ENCODE measurements at regions of chr11 and their contacts with region 1.

Region 1: DNA sequence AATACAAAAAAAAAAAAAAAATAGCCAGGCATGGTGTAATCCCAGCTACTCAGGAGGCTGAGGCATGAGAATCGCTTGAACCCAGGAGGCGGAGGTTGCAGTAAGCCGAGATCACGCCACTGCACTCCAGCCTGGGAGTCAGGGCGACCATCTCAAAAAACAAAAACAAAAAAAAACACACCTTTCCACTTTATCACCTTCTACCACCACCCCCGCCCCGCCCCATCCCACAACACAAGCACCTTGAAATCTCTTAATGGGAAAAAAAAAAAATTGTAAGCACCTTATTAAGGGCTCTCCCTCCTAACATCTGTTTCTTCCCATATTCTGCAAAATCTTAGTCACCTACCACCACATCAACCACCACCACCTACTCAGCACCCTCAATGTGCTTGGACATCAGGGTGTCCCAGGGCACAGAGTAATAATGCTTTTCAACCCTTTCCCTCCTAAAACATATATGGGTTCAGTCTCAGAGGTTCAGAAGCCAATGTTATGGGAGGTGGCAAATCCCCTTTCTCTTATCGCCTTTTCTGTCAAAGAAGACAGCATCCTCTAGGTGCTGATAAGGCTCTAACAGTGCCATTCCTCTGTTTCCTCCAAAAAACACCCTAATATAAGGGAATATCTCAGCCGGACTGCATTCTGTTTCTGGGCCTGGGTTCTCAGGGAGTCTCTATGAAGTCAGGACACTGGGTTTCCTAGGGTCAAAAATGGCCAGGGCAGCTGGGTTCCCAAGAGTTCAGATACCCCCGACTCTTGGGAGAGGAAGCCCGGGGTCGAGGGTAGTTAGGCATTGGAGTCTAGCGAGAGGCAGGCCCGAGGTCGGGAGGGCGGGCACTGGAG is 718 bp downstream of the INTS5 start:
- DNase-seq: no peak
- ATAC-seq: no peak
- H3K4me3 ChIP-seq: peak overlapping the region; percentile 74 to 90 (median 83)
- H3K4me3 Mint-ChIP-seq: peak overlapping the region; percentile 94
- H3K27ac ChIP-seq: peak overlapping the region; percentile 68 to 89
- H3K27ac Mint-ChIP-seq: peak overlapping the region; percentile 97
- H3K4me1 ChIP-seq: peaks cover 14 to 18% of the 10 kb centered on the region in 2 donors
- H3K4me1 Mint-ChIP-seq: peaks cover 22% of the 10 kb centered on the region
- H3K27me3 ChIP-seq: no peaks in the 10 kb centered on the region
- H3K27me3 Mint-ChIP-seq: no peaks in the 10 kb centered on the region
- CTCF ChIP-seq: no peak

Region 2: DNA sequence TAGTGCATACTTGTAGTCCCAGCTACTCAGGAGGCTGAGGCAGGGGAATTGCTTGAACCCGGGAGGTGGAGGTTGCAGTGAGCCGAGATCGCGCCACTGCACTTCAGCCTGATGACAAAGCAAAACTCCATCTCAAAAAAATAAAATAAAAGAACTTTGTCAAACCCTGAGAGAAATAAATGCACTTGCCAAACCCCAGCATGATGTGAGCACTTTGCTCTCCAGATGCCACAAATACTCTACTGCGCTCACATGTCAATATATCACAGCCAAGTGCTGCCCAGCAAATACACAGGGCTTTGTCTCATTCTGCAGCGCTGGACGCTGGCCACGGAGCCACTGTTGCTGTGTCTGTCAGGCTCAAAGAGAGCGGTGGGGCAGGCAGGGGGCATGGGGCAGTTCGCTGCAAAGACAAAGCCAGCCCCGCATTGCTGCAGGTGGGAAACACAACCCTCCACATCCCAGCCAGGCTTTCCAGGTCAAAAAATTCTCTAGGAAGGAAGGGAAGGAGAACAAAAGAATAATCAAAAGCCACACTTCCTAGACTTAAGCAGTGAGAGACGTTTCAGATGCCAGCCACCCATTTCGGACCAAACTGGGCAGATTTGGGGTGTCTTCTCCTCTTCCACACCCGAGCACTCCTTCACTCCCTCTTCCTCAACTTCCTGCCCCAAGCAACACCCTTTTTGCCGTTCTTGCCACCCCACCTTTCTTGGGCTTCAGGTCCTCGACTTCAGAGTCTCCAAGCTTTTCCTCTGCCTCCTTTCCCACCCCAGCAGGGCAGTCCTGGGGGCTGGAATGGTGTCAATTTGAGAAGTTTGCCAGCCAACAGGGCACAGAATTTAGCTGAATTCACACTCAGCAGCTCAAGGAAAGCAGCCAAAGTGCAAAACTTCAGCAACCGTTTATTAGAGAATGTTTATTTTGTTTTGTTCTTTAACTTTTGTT is 150.7 kb before region 1 on chr11:
- CTCF ChIA-PET with region 1: no interaction called
- POLR2A ChIA-PET with region 1: no interaction called
- intact Hi-C with region 1: no loop called
- DNase-seq: no peak
- ATAC-seq: no peak
- H3K4me3 ChIP-seq: no peak overlapping the region
- H3K4me3 Mint-ChIP-seq: no peak overlapping the region
- H3K27ac ChIP-seq: no peak overlapping the region
- H3K27ac Mint-ChIP-seq: no peak overlapping the region
- H3K4me1 ChIP-seq: no peaks in the 10 kb centered on the region
- H3K4me1 Mint-ChIP-seq: no peaks in the 10 kb centered on the region
- H3K27me3 ChIP-seq: peaks cover 0 to 13% (median 2%) of the 10 kb centered on the region in 4 experiments
- H3K27me3 Mint-ChIP-seq: peaks cover 20% of the 10 kb centered on the region
- CTCF ChIP-seq: no peak

Region 3: DNA sequence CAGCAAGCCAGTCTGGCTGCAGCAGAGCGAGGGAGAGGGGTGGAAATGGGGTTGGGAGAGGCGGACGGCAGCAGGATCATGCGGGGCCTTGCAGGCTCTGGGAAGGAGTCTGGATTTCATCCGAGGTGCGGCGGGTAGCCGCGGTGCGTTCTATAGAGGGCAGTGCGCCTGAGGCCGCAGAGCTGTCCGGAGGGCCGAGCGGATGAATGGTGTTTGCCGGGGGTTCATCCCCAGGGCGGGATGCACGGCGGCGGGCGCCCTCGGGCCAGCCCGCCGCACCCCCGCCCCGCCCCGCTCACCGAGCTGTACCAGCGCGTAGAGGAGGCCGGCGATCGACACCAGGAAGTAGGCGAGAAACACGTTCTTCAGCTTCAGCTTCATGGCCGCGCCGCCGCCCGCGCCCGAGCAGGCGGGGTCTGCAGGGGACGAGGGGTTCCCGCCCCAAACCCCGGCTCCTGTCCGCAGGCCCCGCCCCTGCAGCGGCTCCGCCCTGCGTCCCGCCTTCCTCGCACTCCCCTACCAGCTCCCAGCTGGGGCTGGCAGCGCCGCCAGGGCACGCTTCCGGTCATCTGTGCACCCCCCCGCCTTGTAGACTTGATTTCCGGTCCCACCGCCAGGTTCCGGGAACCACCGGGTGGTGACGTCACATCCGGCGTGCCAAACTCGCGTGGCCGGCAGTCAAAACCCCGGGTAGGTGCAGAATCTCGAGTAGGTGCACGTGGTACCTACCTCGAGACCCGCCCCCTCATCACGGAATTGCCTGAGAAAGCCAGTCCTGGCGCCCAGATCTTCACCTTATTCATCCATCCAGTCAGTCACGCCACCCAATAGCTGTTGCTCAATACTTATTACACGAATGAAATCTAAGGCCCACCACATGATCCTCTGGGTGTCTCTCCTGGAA is 30.6 kb before region 1 on chr11 and contains the start of gene B3GAT3:
- CTCF ChIA-PET with region 1: interaction called, 3 read pairs
- POLR2A ChIA-PET with region 1: interaction called, 8 read pairs
- intact Hi-C with region 1: loop called (anchors 1 kb)
- DNase-seq: peak; percentile 99
- ATAC-seq: peak; percentile 92
- H3K4me3 ChIP-seq: peak within 1 kb of the TSS; percentile 80 to 93 (median 88)
- H3K4me3 Mint-ChIP-seq: peak within 1 kb of the TSS; percentile 98
- H3K27ac ChIP-seq: peak within 1 kb of the TSS; percentile 88 to 98
- H3K27ac Mint-ChIP-seq: peak within 1 kb of the TSS; percentile 95
- H3K4me1 ChIP-seq: peaks cover 11 to 19% of the 10 kb centered on the region in 2 donors
- H3K4me1 Mint-ChIP-seq: peaks cover 23% of the 10 kb centered on the region
- H3K27me3 ChIP-seq: no peaks in the 10 kb centered on the region
- H3K27me3 Mint-ChIP-seq: no peaks in the 10 kb centered on the region
- CTCF ChIP-seq: no peak
- total RNA-seq, gene B3GAT3: 63.1 and 66.6 TPM in 2 replicates

Region 4: GRCh38 chr11:62671575-62672389 is 19.4 kb after region 1 on chr11 and contains the starts of genes LBHD1 and UQCC3:
- CTCF ChIA-PET with region 1: interaction called, 5 read pairs
- POLR2A ChIA-PET with region 1: interaction called, 13 read pairs
- intact Hi-C with region 1: loop called (anchors 2 kb)
- DNase-seq: peak; percentile 86
- ATAC-seq: peak; percentile 77
- H3K4me3 ChIP-seq: peak within 1 kb of the TSS; percentile 85 to 97 (median 87)
- H3K4me3 Mint-ChIP-seq: peak within 1 kb of the TSS; percentile 100
- H3K27ac ChIP-seq: peak within 1 kb of the TSS; percentile 56 to 71
- H3K27ac Mint-ChIP-seq: peak within 1 kb of the TSS; percentile 97
- H3K4me1 ChIP-seq: peaks cover 21 to 36% of the 10 kb centered on the region in 2 donors
- H3K4me1 Mint-ChIP-seq: peaks cover 48% of the 10 kb centered on the region
- H3K27me3 ChIP-seq: no peaks in the 10 kb centered on the region
- H3K27me3 Mint-ChIP-seq: no peaks in the 10 kb centered on the region
- CTCF ChIP-seq: no peak
- total RNA-seq, gene LBHD1: 32.5 and 33.3 TPM in 2 replicates
- total RNA-seq, gene UQCC3: 6.5 and 8.9 TPM in 2 replicates

Region 5: GRCh38 chr11:62678770-62679696 is 26.6 kb after region 1 on chr11 and contains the start of gene UBXN1:
- CTCF ChIA-PET with region 1: interaction called, 6 read pairs
- POLR2A ChIA-PET with region 1: interaction called, 13 read pairs
- intact Hi-C with region 1: loop called (anchors 1 kb)
- DNase-seq: peak; percentile 92
- ATAC-seq: peak; percentile 77
- H3K4me3 ChIP-seq: peak within 1 kb of the TSS; percentile 71 to 99 (median 98)
- H3K4me3 Mint-ChIP-seq: peak within 1 kb of the TSS; percentile 88
- H3K27ac ChIP-seq: peak within 1 kb of the TSS; percentile 83 to 99
- H3K27ac Mint-ChIP-seq: peak within 1 kb of the TSS; percentile 93
- H3K4me1 ChIP-seq: peaks cover 9 to 20% of the 10 kb centered on the region in 2 donors
- H3K4me1 Mint-ChIP-seq: peaks cover 34% of the 10 kb centered on the region
- H3K27me3 ChIP-seq: no peaks in the 10 kb centered on the region
- H3K27me3 Mint-ChIP-seq: no peaks in the 10 kb centered on the region
- CTCF ChIP-seq: no peak
- total RNA-seq, gene UBXN1: 186 and 193 TPM in 2 replicates

Region 6: DNA sequence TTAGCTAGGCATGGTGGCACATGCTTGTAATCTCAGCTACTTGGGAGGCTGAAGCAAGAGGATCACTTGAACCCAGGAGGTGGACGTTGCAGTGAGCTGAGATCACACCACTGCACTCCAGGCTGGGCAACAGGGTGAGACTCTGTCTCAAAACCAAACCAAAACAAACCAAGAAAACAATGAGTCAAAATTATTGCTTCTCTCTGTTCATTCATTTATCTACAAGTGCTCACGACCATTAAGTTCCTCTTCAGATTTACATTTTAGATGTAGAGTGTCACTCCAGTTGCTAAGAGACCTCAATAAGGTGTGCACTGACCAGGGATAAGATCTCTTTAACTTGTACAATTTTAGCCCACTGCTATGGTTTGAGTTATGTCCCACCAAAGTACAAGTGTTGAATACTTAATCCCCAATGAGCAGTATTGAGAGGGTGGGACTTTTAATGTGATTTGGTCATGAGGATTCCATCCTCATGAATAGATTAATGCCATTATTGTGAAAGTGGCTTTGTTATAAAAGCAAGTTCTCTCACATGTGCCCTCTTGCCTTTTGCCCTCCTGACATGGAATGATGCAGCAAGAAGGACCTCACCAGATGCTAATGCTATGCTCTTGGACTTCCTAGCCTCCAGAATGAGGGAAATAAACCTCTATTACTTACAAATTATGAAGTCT is 67.1 kb after region 1 on chr11:
- CTCF ChIA-PET with region 1: no interaction called
- POLR2A ChIA-PET with region 1: no interaction called
- intact Hi-C with region 1: no loop called
- DNase-seq: no peak
- ATAC-seq: no peak
- H3K4me3 ChIP-seq: no peak overlapping the region
- H3K4me3 Mint-ChIP-seq: no peak overlapping the region
- H3K27ac ChIP-seq: no peak overlapping the region
- H3K27ac Mint-ChIP-seq: no peak overlapping the region
- H3K4me1 ChIP-seq: peaks cover 8 to 11% of the 10 kb centered on the region in 2 donors
- H3K4me1 Mint-ChIP-seq: peaks cover 27% of the 10 kb centered on the region
- H3K27me3 ChIP-seq: no peaks in the 10 kb centered on the region
- H3K27me3 Mint-ChIP-seq: no peaks in the 10 kb centered on the region
- CTCF ChIP-seq: no peak

Region 7: DNA sequence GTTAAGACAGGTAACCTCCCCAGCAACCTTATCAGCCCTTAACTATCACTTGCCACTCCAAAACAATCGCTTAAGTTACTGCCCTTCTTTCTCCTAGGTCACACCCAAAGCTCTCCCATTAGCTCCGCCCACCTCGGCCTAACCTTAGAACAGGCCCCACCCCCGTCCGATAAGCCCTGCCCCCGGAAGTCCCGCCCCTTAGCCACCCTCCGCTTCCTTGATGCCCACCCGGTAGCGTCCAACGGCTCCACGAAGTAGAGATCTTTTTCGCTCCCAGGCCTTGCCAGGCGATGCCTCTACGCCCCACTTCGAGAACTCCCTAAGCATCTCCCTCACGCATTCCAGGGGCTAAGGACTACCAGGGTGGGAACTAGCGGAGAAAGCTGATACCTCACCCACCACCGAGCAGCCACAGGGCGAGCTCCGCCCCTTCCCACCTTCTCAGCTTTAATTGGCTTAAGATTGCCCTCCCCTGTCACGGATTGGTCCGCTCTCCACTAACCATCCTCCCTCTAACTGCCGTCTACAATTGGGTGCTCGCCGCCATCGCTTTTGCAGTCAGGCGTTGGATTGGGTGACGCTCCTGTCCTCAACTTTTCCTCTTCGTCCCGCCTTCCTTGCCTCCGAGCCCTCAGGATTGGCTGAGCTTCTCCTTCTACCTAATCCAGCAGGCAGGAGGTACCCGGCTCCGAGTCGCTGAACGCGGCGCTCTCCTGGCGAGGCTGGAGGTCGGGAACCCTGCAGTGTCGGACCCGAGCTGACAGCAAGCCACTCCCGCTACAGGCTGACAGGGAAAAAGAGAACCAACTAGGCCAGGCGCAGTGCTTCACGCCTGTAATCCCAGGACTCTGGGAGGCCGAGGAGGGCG is 101.6 kb after region 1 on chr11 and contains the start of gene ZBTB3:
- CTCF ChIA-PET with region 1: no interaction called
- POLR2A ChIA-PET with region 1: no interaction called
- intact Hi-C with region 1: loop called (anchors 1 kb)
- DNase-seq: peak; percentile 99
- ATAC-seq: peak; percentile 92
- H3K4me3 ChIP-seq: peak within 1 kb of the TSS; percentile 82 to 94 (median 86)
- H3K4me3 Mint-ChIP-seq: peak within 1 kb of the TSS; percentile 99
- H3K27ac ChIP-seq: peak within 1 kb of the TSS; percentile 80 to 84
- H3K27ac Mint-ChIP-seq: peak within 1 kb of the TSS; percentile 99
- H3K4me1 ChIP-seq: peaks cover 7 to 21% of the 10 kb centered on the region in 2 donors
- H3K4me1 Mint-ChIP-seq: peaks cover 27% of the 10 kb centered on the region
- H3K27me3 ChIP-seq: no peaks in the 10 kb centered on the region
- H3K27me3 Mint-ChIP-seq: no peaks in the 10 kb centered on the region
- CTCF ChIP-seq: no peak
- total RNA-seq, gene ZBTB3: 22.0 and 24.8 TPM in 2 replicates

Region 8: DNA sequence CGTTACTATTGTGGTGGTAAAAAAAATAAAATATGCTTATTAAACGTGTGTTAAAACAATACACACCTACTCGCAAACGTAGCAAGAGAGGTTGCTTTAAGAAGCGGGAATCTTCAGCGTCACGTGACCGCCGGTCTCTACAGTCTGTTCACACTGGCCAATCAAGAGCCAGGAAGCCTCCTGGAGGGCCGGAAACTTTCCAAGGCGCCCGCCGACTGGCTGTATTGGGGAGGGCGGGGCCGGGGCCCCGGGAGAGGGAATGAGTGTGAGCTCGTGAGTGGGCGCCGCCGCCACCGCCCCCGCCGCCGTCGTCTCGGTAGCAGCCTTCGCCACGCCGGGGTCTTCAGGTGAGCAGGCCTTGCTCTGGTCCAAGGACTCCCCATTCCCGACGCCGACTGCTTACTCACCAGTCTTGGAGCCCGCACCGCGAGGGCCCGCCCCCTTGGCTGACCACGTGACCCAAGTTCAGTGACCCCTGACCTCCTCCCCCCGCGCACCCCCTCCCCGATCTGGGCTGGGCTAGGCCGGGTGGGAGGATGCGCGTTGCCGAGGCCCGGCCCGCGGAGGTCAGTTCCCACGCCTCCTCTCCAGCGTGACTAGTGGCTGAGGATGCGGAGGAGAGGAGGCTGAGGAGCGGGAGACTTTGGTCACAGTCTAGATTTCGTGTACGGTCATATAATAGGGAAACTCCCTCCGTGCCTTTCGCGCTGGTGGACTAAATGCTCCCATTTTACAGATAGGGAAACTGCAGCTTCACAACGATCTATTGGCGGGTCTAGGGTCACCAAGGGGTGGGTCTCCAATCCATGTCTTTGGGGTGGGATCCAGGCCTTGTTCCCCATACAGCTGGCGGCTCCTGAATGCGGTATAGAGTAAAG is 119.0 kb after region 1 on chr11 and contains the start of gene TAF6L:
- CTCF ChIA-PET with region 1: no interaction called
- POLR2A ChIA-PET with region 1: interaction called, 11 read pairs
- intact Hi-C with region 1: no loop called
- DNase-seq: peak; percentile 88
- ATAC-seq: peak; percentile 90
- H3K4me3 ChIP-seq: peak within 1 kb of the TSS; percentile 58 to 97 (median 68)
- H3K4me3 Mint-ChIP-seq: peak within 1 kb of the TSS; percentile 95
- H3K27ac ChIP-seq: peak within 1 kb of the TSS; percentile 63 to 84
- H3K27ac Mint-ChIP-seq: peak within 1 kb of the TSS; percentile 96
- H3K4me1 ChIP-seq: peaks cover 15 to 23% of the 10 kb centered on the region in 2 donors
- H3K4me1 Mint-ChIP-seq: peaks cover 26% of the 10 kb centered on the region
- H3K27me3 ChIP-seq: no peaks in the 10 kb centered on the region
- H3K27me3 Mint-ChIP-seq: no peaks in the 10 kb centered on the region
- CTCF ChIP-seq: no peak
- total RNA-seq, gene TAF6L: 43.2 and 48.2 TPM in 2 replicates